PC-3 (cell line): ENCODE measurements at regions of chr1 and their contacts with region 1.

Region 1: GRCh38 chr1:105137543-105138457 is 1388.1 kb downstream of the AMY1C start:
- DNase-seq: peak; percentile 61
- ATAC-seq: peak; percentile 88
- H3K4me3 ChIP-seq: no peak overlapping the region
- H3K27ac ChIP-seq: no peak overlapping the region
- H3K4me1 ChIP-seq: no peaks in the 10 kb centered on the region
- H3K27me3 ChIP-seq: peaks cover 3% of the 10 kb centered on the region; the same call in 1 of the 2 replicates
- CTCF ChIP-seq: peak; percentile 61

Region 2: GRCh38 chr1:104905322-104905721 is 232.5 kb before region 1 on chr1:
- CTCF ChIA-PET with region 1: no interaction called
- POLR2A ChIA-PET with region 1: no interaction called
- intact Hi-C with region 1: loop called (anchors 5 kb)
- DNase-seq: no peak
- ATAC-seq: no peak
- H3K4me3 ChIP-seq: no peak overlapping the region
- H3K27ac ChIP-seq: no peak overlapping the region
- H3K4me1 ChIP-seq: no peaks in the 10 kb centered on the region
- H3K27me3 ChIP-seq: no peaks in the 10 kb centered on the region
- CTCF ChIP-seq: no peak

Region 3: GRCh38 chr1:105436589-105437259 is 298.9 kb after region 1 on chr1:
- CTCF ChIA-PET with region 1: no interaction called
- POLR2A ChIA-PET with region 1: no interaction called
- intact Hi-C with region 1: no loop called
- DNase-seq: no peak
- ATAC-seq: no peak
- H3K4me3 ChIP-seq: no peak overlapping the region
- H3K27ac ChIP-seq: no peak overlapping the region
- H3K4me1 ChIP-seq: no peaks in the 10 kb centered on the region
- H3K27me3 ChIP-seq: no peaks in the 10 kb centered on the region
- CTCF ChIP-seq: no peak

Region 4: DNA sequence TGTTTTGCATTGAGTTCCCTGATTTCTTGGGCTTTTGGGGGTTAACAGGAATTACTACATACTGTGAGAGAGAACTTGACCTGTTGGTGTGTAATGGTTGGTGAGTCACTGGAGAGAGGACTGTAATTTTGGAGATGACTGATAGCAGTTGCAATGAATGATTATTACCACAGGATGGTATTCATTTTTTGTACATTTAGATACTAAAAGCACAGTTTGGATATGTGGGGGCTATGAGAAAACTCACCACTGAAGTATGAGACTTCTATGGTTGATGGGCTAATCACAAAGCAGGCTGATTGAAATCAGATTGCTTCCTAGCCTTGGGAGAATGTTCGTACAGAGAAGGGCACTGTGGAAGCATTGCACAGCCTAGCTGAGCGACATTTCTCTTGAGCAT is 347.4 kb after region 1 on chr1:
- CTCF ChIA-PET with region 1: no interaction called
- POLR2A ChIA-PET with region 1: no interaction called
- intact Hi-C with region 1: no loop called
- DNase-seq: peak; percentile 44
- ATAC-seq: peak; percentile 45; the same call in 1 of the 2 replicates
- H3K4me3 ChIP-seq: no peak overlapping the region
- H3K27ac ChIP-seq: no peak overlapping the region
- H3K4me1 ChIP-seq: no peaks in the 10 kb centered on the region; the same call in 1 of the 2 replicates
- H3K27me3 ChIP-seq: no peaks in the 10 kb centered on the region
- CTCF ChIP-seq: no peak

Region 5: GRCh38 chr1:106554294-106554693 is 1416.5 kb after region 1 on chr1:
- CTCF ChIA-PET with region 1: no interaction called
- POLR2A ChIA-PET with region 1: no interaction called
- intact Hi-C with region 1: no loop called
- DNase-seq: peak; percentile 43
- ATAC-seq: peak; percentile 49
- H3K4me3 ChIP-seq: no peak overlapping the region
- H3K27ac ChIP-seq: no peak overlapping the region
- H3K4me1 ChIP-seq: peaks cover 7% of the 10 kb centered on the region; the same call in 1 of the 2 replicates
- H3K27me3 ChIP-seq: no peaks in the 10 kb centered on the region
- CTCF ChIP-seq: no peak